Activated naive CD4-positive, alpha-beta T cell treated with anti-CD3 and anti-CD28 coated beads for 36 hours (primary cell): ENCODE measurements at regions of chr2 and their contacts with region 1.

Region 1: GRCh38 chr2:26088032-26088643 is 54.3 kb downstream of the RAB10 start:
- DNase-seq: peak; percentile 17
- H3K4me3 Mint-ChIP-seq: no peak overlapping the region
- H3K27ac Mint-ChIP-seq: no peak overlapping the region
- H3K4me1 Mint-ChIP-seq: peaks cover 48% of the 10 kb centered on the region
- H3K27me3 Mint-ChIP-seq: no peaks in the 10 kb centered on the region

Region 2: DNA sequence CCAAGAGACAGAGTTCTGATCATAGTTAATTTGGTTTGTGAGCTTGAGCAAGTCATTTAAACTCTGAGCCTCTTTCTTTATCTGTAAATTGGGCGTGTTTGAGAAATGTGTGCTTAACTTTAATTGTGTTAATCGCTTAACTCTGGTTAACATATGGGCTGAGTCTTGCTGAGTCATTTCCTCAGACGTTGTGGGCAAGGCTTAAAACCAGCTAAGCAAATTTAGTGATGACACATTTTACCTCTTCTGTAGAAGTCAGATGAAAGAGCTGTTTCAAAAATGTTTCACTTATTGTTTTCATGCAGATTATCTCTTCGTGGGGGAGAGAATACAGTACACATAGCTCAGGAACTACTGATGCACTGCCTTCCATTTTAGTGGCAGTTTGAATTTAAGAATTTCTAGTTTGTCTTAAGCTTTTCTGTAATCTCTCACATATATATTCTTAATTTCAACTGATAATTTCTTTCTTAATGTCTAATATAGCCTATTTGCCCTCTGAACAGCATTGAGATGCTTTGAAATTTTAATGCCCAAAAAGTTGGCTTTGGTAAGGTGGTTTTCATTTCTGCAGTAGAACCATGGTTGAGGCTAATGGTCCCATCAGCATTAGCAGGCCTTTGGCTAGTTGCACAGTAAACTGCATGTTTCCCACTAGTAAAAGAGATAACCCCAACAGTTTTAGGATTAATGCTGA is 19.4 kb before region 1 on chr2:
- CTCF ChIA-PET with region 1: interaction called, 13 read pairs
- intact Hi-C with region 1: loop called (anchors 1 kb)
- DNase-seq: peak; percentile 76
- H3K4me3 Mint-ChIP-seq: no peak overlapping the region
- H3K27ac Mint-ChIP-seq: peak overlapping the region; percentile 20
- H3K4me1 Mint-ChIP-seq: peaks cover 47% of the 10 kb centered on the region
- H3K27me3 Mint-ChIP-seq: no peaks in the 10 kb centered on the region

Region 3: DNA sequence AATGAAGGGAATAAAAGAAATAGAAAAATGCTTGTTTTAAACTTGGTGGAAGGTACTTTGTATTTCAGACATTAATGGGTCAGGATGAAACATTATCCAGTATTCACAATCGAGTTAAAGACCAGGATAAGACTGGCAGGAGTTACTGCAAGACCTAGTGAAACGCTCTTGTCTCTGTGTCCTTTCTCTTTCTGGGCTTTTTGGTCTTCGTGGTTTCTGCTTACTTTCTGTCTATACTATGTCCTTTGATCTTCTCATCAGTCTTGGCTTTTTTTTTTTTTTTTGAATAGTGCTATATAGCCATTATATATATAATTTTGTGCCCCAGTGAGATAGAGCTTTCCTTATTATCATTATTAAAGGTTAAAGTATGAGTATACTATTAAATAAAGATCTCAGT is 42.6 kb after region 1 on chr2:
- CTCF ChIA-PET with region 1: interaction called, 4 read pairs
- intact Hi-C with region 1: loop called (anchors 5 kb)
- DNase-seq: no peak
- H3K4me3 Mint-ChIP-seq: no peak overlapping the region
- H3K27ac Mint-ChIP-seq: no peak overlapping the region
- H3K4me1 Mint-ChIP-seq: peaks cover 19% of the 10 kb centered on the region
- H3K27me3 Mint-ChIP-seq: no peaks in the 10 kb centered on the region

Region 4: DNA sequence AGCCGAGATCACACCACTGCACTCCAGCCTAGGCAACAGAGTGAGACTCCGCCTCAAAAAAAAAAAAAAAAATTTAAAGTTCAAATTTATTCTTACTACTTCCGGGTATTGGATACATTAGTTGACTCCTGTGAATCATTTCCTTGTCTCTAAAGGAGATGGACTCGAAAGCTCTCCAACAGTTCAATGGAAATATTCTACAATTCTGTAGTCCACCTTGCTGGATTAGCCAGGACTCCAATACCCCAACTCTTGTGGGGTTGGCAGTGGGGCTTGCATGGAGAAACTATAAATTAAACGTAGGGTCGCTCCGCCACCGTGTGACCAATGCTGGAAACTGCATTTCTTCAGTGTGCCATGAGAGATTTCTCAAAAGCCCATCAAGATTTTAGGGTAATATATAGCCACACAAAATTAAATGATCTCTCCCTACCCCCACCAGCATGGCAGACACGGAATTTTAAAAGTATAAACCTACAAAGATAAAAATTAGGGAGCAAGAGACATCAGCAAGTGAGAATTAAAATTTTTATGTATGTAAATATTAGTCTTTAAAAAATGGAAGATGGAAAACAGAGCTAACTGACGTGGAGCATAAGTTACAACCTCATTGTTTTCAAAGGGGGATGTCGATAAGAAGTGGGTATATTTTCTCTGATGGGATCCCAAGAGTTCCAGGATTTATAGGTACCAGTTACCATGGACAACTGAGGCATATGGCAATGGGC is 57.0 kb after region 1 on chr2:
- CTCF ChIA-PET with region 1: interaction called, 11 read pairs
- intact Hi-C with region 1: loop called (anchors 1 kb)
- DNase-seq: peak; percentile 82
- H3K4me3 Mint-ChIP-seq: no peak overlapping the region
- H3K27ac Mint-ChIP-seq: no peak overlapping the region
- H3K4me1 Mint-ChIP-seq: no peaks in the 10 kb centered on the region
- H3K27me3 Mint-ChIP-seq: peaks cover 2% of the 10 kb centered on the region

Region 5: GRCh38 chr2:26274058-26274613 is 186.0 kb after region 1 on chr2:
- CTCF ChIA-PET with region 1: no interaction called
- intact Hi-C with region 1: no loop called
- DNase-seq: no peak
- H3K4me3 Mint-ChIP-seq: no peak overlapping the region
- H3K27ac Mint-ChIP-seq: no peak overlapping the region
- H3K4me1 Mint-ChIP-seq: peaks cover 16% of the 10 kb centered on the region
- H3K27me3 Mint-ChIP-seq: no peaks in the 10 kb centered on the region